ENCODE measurements at regions of chr11 and their contacts with region 1.

Region 1: GRCh38 chr11:78645226-78646202 is 70.8 kb upstream of the NARS2 start:
- DNase-seq: peak; percentile 48
- H3K4me3 ChIP-seq: no peak overlapping the region
- H3K27ac ChIP-seq: no peak overlapping the region
- H3K27me3 ChIP-seq: no peaks in the 10 kb centered on the region
- CTCF ChIP-seq: peak; percentile 95

Region 2: GRCh38 chr11:78542007-78542406 is 103.5 kb before region 1 on chr11:
- CTCF ChIA-PET with region 1: no interaction called
- POLR2A ChIA-PET with region 1: no interaction called
- DNase-seq: peak; percentile 21
- H3K4me3 ChIP-seq: no peak overlapping the region
- H3K27ac ChIP-seq: no peak overlapping the region
- H3K27me3 ChIP-seq: no peaks in the 10 kb centered on the region
- CTCF ChIP-seq: no peak

Region 3: DNA sequence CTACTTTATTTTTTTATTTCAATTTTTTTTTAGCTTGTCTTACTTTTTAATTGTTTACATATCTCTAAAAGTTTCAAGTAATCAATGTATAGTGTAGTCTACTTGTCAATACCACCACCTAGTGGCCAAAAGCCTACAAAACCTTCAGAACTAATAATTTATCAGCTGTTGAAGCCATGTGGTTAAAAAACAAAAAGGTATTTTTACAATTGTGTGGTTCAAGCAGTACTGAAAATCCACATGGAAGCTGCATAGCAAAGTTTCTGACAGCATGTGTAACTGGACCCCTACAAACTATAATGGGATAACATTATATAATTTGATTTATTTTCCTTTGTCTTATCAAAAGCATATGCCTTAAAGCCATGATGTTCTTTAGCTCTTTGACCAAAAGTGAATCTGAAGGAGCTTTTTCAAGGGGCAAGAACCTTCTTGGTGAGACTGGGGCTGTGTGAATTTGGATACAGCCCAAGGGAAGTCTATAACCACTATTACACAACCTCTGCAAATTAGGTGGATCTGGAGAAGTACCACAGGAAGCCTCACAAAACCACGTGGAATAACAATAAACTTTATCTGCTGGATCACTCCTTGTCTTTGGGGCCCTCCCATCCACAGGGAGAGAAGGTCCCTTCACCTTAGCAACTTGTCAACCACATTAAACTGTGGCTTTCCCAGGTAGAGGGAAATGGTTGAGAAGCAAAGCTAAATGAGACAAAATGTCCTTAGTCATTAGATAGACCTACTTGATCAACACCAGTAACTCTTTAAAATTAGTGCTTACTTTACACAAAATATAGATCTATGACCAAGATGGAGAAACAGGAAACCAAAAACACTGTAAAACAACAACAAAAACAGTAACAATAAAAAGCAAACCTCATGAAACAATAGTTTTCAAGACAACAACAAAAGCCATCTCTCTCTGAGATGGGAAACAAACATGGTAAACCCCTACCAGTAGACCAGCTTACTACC is 80.7 kb before region 1 on chr11:
- CTCF ChIA-PET with region 1: no interaction called
- POLR2A ChIA-PET with region 1: no interaction called
- DNase-seq: peak; percentile 49
- H3K4me3 ChIP-seq: no peak overlapping the region
- H3K27ac ChIP-seq: no peak overlapping the region
- H3K27me3 ChIP-seq: no peaks in the 10 kb centered on the region
- CTCF ChIP-seq: peak; percentile 73

Region 4: DNA sequence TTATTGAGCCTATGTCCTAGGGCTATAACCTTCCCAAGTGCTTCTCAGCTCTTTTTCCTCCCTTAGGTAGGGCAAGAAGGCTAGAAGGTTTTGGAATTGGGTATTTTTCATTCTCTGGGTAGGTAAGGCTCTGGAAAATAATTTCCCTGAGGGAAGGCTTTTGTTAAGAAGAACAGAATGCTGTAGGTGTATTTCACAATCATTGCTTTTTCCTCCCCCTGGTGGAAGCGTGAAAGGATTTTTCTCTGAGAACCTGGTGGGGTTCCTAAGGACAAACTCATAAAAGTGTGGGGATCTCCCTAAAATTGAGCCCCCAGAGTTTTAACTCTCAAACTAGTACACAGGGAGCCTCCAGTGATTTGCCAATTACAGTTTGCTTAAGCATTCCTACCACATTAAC is 29.8 kb before region 1 on chr11:
- CTCF ChIA-PET with region 1: no interaction called
- POLR2A ChIA-PET with region 1: no interaction called
- DNase-seq: no peak
- H3K4me3 ChIP-seq: no peak overlapping the region
- H3K27ac ChIP-seq: no peak overlapping the region
- H3K27me3 ChIP-seq: no peaks in the 10 kb centered on the region
- CTCF ChIP-seq: peak; percentile 40

Region 5: GRCh38 chr11:78664636-78665035 is 19.1 kb after region 1 on chr11:
- CTCF ChIA-PET with region 1: interaction called, 12 read pairs
- POLR2A ChIA-PET with region 1: no interaction called
- DNase-seq: no peak
- H3K4me3 ChIP-seq: no peak overlapping the region
- H3K27ac ChIP-seq: no peak overlapping the region
- H3K27me3 ChIP-seq: no peaks in the 10 kb centered on the region
- CTCF ChIP-seq: no peak

Region 6: DNA sequence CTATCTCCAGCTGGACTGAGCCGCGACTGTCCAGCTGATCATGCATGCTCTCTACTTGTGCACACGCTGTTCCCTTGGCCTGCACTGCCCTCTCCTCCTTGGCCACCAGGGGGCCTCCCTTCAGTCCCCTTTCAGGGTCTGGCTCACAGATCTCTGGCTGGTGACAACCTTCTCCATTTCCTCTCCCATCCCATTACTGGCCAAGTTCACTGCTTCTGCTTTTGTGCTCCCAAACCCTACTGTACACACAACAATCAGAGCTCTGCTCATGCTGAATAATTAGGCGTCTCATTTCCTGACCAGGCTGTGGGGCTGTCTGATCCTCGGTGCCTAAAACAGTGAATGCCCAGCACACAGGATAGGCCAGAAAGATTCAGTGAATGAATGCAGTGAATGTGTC is 153.1 kb after region 1 on chr11:
- CTCF ChIA-PET with region 1: interaction called, 57 read pairs
- POLR2A ChIA-PET with region 1: no interaction called
- DNase-seq: no peak
- H3K4me3 ChIP-seq: no peak overlapping the region
- H3K27ac ChIP-seq: peak overlapping the region; percentile 49
- H3K27me3 ChIP-seq: no peaks in the 10 kb centered on the region
- CTCF ChIP-seq: peak; percentile 87

Region 7: DNA sequence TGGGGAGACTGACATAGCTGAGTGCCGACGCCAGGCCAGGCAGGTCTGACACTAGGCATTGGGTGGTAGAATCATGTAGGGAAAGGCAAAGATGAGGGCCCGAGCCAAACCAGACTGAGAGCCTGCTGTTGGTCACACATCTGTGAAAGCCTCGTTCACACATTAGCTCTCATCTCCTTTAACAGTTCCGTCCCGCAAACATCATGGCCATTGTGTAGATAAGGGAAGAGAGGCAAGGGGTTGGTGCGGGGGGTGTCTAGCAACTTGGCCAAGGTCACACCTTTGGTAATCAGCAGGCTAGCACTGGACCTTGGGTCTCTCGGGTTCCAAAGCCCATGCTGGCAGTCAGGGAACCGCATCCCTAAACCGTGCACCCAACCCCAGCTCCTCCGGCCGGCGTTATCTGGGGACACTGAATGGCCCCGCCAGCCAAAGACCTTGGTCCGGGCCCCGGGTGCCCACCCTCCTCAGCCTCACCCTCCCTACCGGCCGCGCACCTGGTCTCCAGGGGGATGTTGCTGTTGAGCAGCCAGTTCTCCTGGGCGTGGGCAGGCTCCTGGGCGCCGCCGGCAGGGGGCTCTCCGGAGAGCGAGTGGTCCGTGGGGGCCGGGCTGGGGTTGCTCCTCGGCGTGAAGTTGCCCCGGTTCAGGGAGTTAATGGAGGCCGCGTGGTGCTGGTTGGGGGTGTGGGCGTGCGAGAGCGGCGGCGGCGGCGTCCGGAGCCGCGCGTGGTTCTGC is 257.4 kb after region 1 on chr11:
- CTCF ChIA-PET with region 1: no interaction called
- POLR2A ChIA-PET with region 1: no interaction called
- DNase-seq: no peak
- H3K4me3 ChIP-seq: no peak overlapping the region
- H3K27ac ChIP-seq: no peak overlapping the region
- H3K27me3 ChIP-seq: no peaks in the 10 kb centered on the region
- CTCF ChIP-seq: no peak

Region 8: DNA sequence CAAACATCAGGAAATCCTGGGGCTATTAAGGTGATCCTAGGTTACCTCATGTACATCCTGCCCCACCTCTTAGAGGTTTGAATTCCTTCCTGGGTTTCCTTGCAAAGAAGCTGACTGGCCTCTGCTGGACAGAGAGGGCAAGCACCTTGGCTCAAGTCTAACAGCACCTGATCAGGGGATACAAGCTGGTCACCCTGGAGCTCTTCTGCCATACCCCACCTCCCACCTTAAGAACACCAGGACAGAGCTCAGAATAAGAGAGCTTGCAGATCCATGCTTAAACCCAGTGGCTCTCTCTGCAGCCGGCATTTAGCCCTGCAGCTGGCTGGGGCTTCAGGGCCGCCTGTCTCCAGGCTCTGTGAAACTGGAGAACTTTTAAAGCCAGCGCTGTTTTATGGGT is 315.7 kb after region 1 on chr11:
- CTCF ChIA-PET with region 1: interaction called, 87 read pairs
- POLR2A ChIA-PET with region 1: no interaction called
- DNase-seq: no peak
- H3K4me3 ChIP-seq: 0 out of 2 replicates have a peak overlapping the region, but pooled peaks have one; percentile 49
- H3K27ac ChIP-seq: no peak overlapping the region
- H3K27me3 ChIP-seq: no peaks in the 10 kb centered on the region
- CTCF ChIP-seq: peak; percentile 54

Region 9: GRCh38 chr11:79076526-79077115 is 431.1 kb after region 1 on chr11:
- CTCF ChIA-PET with region 1: interaction called, 12 read pairs
- POLR2A ChIA-PET with region 1: no interaction called
- DNase-seq: no peak
- H3K4me3 ChIP-seq: no peak overlapping the region
- H3K27ac ChIP-seq: no peak overlapping the region
- H3K27me3 ChIP-seq: no peaks in the 10 kb centered on the region
- CTCF ChIP-seq: peak; percentile 62

Region 10: DNA sequence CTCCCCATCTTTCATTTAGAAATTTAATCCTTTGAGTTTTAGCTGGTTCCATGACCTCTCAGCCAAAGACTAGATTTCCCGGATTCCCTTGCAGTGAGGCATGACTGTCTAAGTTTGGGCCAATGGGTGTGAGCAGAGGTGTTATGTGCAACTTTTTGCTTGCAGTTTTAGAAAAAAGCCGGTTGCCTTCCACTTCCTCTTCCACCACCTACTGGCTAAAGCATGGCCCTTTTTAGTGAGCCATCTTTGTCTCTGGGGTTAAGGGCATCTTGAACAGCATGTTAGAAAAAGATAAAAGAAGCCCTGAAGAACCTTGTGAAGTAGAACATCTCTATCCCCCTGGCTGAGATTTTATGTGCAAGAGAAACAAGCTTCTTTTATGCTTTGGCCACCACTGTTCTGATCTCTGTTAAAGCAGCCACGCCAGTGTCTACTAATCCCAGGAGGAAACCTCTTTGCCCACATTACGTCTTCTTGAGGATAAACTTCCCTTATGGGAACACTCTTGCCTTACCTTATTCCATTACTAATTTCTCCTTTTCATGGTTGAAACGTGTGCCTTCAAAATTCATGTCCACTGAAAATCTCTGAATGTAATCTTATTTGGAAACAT is 515.4 kb after region 1 on chr11:
- CTCF ChIA-PET with region 1: interaction called, 11 read pairs
- POLR2A ChIA-PET with region 1: no interaction called
- DNase-seq: no peak
- H3K4me3 ChIP-seq: no peak overlapping the region
- H3K27ac ChIP-seq: no peak overlapping the region
- H3K27me3 ChIP-seq: no peaks in the 10 kb centered on the region
- CTCF ChIP-seq: no peak

Region 11: DNA sequence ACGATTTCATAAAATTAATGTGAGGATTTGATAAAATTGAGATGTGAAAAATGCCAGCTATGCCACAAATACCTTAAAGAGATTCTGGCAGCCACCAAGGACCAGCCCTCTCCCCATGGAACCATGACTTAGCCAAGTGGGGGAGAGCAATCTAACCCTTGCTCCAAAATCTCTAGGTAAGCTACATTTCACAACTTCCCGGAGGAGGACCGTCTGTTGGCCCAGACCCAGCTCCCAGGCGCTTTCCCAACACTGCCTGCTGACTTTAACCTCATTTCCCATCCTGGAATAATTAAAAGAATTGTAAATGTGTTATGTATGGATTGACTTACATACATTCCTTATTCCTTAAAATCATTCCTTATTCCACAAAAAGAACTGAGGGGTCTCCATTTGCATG is 842.8 kb after region 1 on chr11:
- CTCF ChIA-PET with region 1: interaction called, 74 read pairs
- POLR2A ChIA-PET with region 1: no interaction called
- DNase-seq: no peak
- H3K4me3 ChIP-seq: no peak overlapping the region
- H3K27ac ChIP-seq: no peak overlapping the region
- H3K27me3 ChIP-seq: peaks cover 15% of the 10 kb centered on the region
- CTCF ChIP-seq: no peak